ENCODE measurements at regions of chrX and their contacts with region 1.

Region 1: DNA sequence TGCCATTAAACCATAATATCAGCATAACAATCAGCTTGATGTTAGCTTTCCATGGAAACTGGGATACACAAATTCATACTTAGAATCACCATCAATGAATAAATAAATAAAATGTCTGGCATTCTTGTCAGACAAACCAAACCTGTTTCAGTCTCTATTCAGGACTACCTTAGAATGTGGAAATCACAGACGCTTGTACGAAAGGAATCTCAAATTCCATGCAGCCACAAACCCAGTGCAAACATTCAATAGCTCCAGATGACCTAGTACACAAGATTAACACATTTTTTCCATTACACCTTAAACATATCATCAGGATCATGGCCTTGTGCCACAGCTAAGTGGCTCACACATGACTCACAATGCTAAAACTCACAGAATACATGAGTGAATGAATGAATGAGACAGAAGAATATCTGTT is 134.1 kb downstream of the PWWP3B start:
- DNase-seq: peak; percentile 90
- H3K4me3 ChIP-seq: no peak overlapping the region
- H3K27ac ChIP-seq: peak overlapping the region; percentile 93
- H3K4me1 ChIP-seq: peaks cover 16% of the 10 kb centered on the region
- H3K27me3 ChIP-seq: peaks cover 2% of the 10 kb centered on the region
- CTCF ChIP-seq: no peak

Region 2: GRCh38 chrX:106247162-106247561 is 55.1 kb before region 1 on chrX:
- CTCF ChIA-PET with region 1: no interaction called
- dilution Hi-C with region 1: no loop called
- in situ Hi-C with region 1: no loop called
- intact Hi-C with region 1: loop called (anchors 10 kb)
- DNase-seq: peak; percentile 67
- H3K4me3 ChIP-seq: no peak overlapping the region
- H3K27ac ChIP-seq: peak overlapping the region; percentile 84
- H3K4me1 ChIP-seq: peaks cover 15% of the 10 kb centered on the region
- H3K27me3 ChIP-seq: no peaks in the 10 kb centered on the region
- CTCF ChIP-seq: no peak

Region 3: DNA sequence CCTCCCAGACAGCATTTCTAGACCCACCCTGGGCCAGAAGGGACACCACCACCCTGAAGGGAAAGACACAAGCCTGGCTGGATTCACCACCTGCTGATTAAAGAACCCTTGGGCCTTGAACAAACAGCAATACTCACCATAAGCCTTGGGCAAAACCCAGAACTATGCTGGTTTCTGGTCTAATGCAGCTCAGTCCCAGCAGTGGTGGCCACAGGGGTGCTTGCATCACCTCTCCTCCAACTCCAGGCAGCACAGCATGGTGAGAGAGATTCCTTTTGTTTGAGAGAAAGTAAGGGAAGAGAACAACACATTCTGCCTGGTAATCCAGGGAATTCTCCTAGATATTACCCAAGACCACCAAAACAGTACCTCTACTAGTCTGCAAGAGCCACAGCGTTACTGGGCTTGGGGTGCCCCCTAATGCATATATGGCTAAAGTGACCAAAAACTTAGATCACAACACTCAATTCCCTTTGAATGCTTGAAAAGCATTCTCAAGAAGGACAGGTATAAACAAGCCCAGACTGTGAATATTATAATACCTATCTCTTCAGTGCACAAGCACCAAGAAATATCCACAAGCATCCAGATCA is 449.9 kb after region 1 on chrX:
- CTCF ChIA-PET with region 1: no interaction called
- dilution Hi-C with region 1: no loop called
- in situ Hi-C with region 1: no loop called
- intact Hi-C with region 1: no loop called
- DNase-seq: peak; percentile 35
- H3K4me3 ChIP-seq: no peak overlapping the region
- H3K27ac ChIP-seq: peak overlapping the region; percentile 7
- H3K4me1 ChIP-seq: peaks cover 9% of the 10 kb centered on the region
- H3K27me3 ChIP-seq: no peaks in the 10 kb centered on the region
- CTCF ChIP-seq: peak in 1 of 2 donors; percentile 40

Measured in mammary epithelial cell (primary cell).